Endothelial cell of umbilical vein (primary cell): ENCODE measurements at regions of chr1 and their contacts with region 1.

Region 1: DNA sequence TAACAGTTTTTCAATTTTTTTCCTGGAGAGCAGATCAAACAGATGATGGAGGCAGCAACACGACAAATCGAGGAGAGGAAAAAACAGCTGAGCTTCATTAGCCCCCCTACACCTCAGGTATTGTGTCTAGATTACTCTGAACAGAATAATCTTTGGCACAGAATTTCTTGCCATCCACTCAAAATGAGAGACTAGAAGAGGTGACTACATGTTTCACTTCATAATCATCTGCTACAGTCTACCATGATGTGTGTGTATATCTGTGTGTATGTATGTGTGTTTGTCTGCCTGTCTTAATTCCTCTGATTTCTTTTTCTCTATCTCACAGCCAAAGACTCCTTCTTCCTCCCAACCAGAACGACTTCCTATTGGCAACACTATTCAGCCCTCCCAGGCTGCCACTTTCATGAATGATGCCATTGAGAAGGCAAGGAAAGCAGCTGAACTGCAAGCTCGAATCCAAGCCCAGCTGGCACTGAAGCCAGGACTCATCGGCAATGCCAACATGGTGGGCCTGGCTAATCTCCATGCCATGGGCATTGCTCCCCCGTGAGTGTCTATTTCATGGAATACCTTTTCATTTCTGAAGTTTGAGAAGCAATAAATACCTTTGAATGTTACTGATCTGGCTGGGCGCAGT is 11.4 kb downstream of the PRPF3 start:
- DNase-seq: no peak
- H3K4me3 ChIP-seq: no peak overlapping the region
- H3K27ac ChIP-seq: no peak overlapping the region
- H3K4me1 ChIP-seq: no peaks in the 10 kb centered on the region
- H3K27me3 ChIP-seq: no peaks in the 10 kb centered on the region
- CTCF ChIP-seq: no peak
- POLR2A ChIP-seq: no peak

Region 2: DNA sequence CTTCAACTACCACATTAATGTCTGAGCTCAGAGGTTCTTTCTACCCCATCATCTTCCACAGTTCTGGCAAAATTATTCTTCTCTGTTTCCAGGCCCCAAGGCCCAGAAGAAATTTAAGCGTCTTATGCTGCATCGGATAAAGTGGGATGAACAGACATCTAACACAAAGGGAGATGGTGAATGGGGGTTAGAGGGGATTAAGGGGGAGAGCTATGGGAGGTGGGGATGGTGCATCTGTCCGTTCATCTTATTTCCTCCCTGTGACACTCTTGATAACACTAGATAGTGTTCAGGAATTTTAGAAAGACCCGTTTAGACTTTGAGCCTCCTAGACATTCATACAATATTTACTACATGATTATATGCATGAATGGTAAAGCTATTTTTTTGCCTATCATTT is 13.5 kb after region 1 on chr1:
- CTCF ChIA-PET with region 1: interaction called, 12 read pairs
- POLR2A ChIA-PET with region 1: no interaction called
- dilution Hi-C with region 1: no loop called
- intact Hi-C with region 1: no loop called
- DNase-seq: no peak
- H3K4me3 ChIP-seq: no peak overlapping the region
- H3K27ac ChIP-seq: no peak overlapping the region
- H3K4me1 ChIP-seq: no peaks in the 10 kb centered on the region
- H3K27me3 ChIP-seq: no peaks in the 10 kb centered on the region
- CTCF ChIP-seq: no peak
- POLR2A ChIP-seq: no peak

Region 3: GRCh38 chr1:150387200-150387599 is 54.4 kb after region 1 on chr1:
- CTCF ChIA-PET with region 1: no interaction called
- POLR2A ChIA-PET with region 1: no interaction called
- dilution Hi-C with region 1: no loop called
- intact Hi-C with region 1: no loop called
- DNase-seq: no peak
- H3K4me3 ChIP-seq: no peak overlapping the region
- H3K27ac ChIP-seq: no peak overlapping the region
- H3K4me1 ChIP-seq: no peaks in the 10 kb centered on the region
- H3K27me3 ChIP-seq: no peaks in the 10 kb centered on the region
- CTCF ChIP-seq: no peak
- POLR2A ChIP-seq: no peak